PC-3 (cell line): ENCODE measurements at regions of chr10 and their contacts with region 1.

Region 1: DNA sequence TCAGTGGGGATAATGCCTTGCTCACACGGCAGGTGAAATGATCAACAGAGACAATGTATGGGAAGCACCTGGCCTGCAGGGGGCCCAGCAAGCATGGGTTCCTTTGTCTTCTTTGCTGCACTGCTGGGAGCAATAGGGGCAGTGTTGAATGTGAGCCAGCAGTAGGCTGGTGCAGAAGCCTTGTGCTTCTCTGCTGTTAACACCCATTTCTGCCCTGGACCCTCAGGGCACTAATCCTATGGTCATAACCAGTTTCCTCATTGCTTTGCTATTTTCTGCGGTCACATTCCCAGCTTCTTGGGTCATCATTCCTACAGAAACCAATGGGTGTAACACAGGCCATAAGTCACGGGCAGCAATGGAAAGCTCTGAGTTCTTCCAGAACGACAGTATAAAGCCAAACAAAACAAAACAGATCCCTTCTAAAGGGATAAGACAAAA is 10.9 kb upstream of the LGI1 start:
- DNase-seq: peak; percentile 94
- ATAC-seq: peak; percentile 89
- H3K4me3 ChIP-seq: no peak overlapping the region
- H3K27ac ChIP-seq: peak overlapping the region; percentile 41; the same call in 1 of the 2 replicates
- H3K4me1 ChIP-seq: peaks cover 8% of the 10 kb centered on the region; the same call in 1 of the 2 replicates
- H3K27me3 ChIP-seq: no peaks in the 10 kb centered on the region
- CTCF ChIP-seq: peak; percentile 67

Region 2: DNA sequence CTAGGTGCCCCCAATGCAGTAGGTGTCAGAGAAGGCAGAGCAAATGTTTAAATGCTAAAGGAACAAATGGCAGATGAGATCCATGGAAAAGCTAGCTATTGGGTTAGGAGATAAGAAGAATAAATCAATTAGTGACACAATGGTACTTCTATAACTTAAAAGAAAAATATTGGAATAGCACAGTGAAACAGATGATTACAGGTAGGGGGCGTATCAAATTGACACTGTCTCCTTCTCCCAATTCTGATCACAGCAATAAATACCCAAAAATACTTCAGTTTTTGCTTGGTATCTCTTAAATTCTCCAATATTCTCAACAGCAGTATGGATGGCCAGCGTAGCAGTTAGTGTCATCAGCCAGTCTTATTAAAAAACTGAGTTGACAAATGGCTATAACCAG is 49.7 kb before region 1 on chr10:
- CTCF ChIA-PET with region 1: interaction called, 10 read pairs
- POLR2A ChIA-PET with region 1: no interaction called
- intact Hi-C with region 1: no loop called
- DNase-seq: no peak
- ATAC-seq: no peak
- H3K4me3 ChIP-seq: no peak overlapping the region
- H3K27ac ChIP-seq: no peak overlapping the region
- H3K4me1 ChIP-seq: peaks cover 6% of the 10 kb centered on the region; the same call in 1 of the 2 replicates
- H3K27me3 ChIP-seq: no peaks in the 10 kb centered on the region
- CTCF ChIP-seq: peak; percentile 51

Region 3: DNA sequence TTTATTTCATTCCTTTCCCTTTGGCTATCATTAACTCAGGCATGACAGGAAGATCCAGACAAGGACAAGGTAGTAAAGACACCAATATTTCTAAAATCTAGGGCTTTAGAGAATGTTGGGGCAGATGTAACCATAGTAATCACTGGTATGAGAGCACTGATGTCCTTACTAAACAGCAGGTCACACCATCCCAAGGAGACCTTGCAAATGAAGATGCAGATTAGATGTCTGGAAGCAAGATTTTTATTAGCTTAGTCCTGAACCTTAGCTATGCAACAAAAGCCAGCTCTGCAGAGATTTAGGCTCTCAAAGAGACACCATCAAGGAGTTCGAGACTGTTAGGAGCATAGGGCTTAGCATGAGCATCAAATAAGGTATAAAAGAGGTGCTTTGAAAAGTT is 20.8 kb before region 1 on chr10:
- CTCF ChIA-PET with region 1: no interaction called
- POLR2A ChIA-PET with region 1: interaction called, 19 read pairs
- intact Hi-C with region 1: no loop called
- DNase-seq: no peak
- ATAC-seq: no peak
- H3K4me3 ChIP-seq: no peak overlapping the region
- H3K27ac ChIP-seq: no peak overlapping the region
- H3K4me1 ChIP-seq: peaks cover 5% of the 10 kb centered on the region; the same call in 1 of the 2 replicates
- H3K27me3 ChIP-seq: no peaks in the 10 kb centered on the region; the same call in 1 of the 2 replicates
- CTCF ChIP-seq: no peak

Region 4: DNA sequence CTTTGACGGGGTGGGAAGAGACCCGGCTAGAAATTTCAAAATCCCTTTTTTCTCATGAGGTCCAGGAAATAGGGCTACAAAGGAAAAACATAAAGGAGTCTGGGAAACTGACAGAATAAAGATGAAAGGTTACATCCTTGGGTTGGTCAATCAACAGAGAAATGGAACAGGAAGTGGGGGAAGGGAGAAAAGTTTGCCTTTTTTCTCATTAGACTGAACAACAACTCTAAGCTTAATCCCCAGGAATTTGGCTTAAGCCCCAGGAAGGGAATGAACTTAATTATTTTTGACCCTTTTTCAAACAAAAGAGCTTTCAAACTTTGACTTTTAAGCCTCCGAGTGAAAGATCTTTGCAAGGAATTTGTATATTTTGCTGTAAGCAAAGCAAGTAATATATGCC is 43.6 kb after region 1 on chr10:
- CTCF ChIA-PET with region 1: no interaction called
- POLR2A ChIA-PET with region 1: no interaction called
- intact Hi-C with region 1: no loop called
- DNase-seq: no peak
- ATAC-seq: no peak
- H3K4me3 ChIP-seq: no peak overlapping the region
- H3K27ac ChIP-seq: no peak overlapping the region
- H3K4me1 ChIP-seq: no peaks in the 10 kb centered on the region
- H3K27me3 ChIP-seq: 0 out of 2 replicates have a peak, but pooled peaks cover 6% of the 10 kb centered on the region
- CTCF ChIP-seq: no peak

Region 5: GRCh38 chr10:93873427-93874115 is 126.7 kb after region 1 on chr10:
- CTCF ChIA-PET with region 1: no interaction called
- POLR2A ChIA-PET with region 1: no interaction called
- intact Hi-C with region 1: no loop called
- DNase-seq: no peak
- ATAC-seq: no peak
- H3K4me3 ChIP-seq: no peak overlapping the region
- H3K27ac ChIP-seq: no peak overlapping the region
- H3K4me1 ChIP-seq: no peaks in the 10 kb centered on the region
- H3K27me3 ChIP-seq: no peaks in the 10 kb centered on the region
- CTCF ChIP-seq: no peak

Region 6: GRCh38 chr10:93977442-93977841 is 230.6 kb after region 1 on chr10:
- CTCF ChIA-PET with region 1: interaction called, 14 read pairs
- POLR2A ChIA-PET with region 1: interaction called, 5 read pairs
- intact Hi-C with region 1: no loop called
- DNase-seq: no peak
- ATAC-seq: no peak
- H3K4me3 ChIP-seq: no peak overlapping the region
- H3K27ac ChIP-seq: no peak overlapping the region
- H3K4me1 ChIP-seq: no peaks in the 10 kb centered on the region
- H3K27me3 ChIP-seq: no peaks in the 10 kb centered on the region
- CTCF ChIP-seq: peak; percentile 28; the same call in 1 of the 2 replicates